H1 (cell line): ENCODE measurements at regions of chr20 and their contacts with region 1.

Region 1: DNA sequence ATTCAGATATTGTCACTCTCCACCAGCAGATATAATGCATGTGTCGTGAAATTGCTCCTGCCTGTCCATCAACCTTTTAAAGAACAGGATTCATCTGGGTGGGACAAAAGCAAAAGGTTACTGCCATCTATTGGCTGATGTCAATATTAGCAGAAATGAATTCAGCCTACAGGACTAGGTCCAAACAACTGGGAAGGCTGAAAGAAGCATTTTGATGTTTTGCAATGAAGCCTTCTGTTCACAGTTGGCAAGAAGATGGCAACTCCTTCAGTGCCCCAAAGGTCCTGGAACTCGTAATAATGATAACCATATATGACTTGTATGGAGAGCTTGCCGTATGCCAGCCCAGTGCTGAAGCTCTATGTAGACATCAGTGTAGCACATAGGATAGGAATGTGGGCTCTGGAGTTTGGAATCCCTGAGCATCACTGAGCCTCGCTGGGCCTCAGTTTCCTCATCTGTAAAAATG is 7.5 kb downstream of the BCAS1 start:
- DNase-seq: no peak
- H3K4me3 ChIP-seq: no peak overlapping the region
- H3K27ac ChIP-seq: no peak overlapping the region
- H3K4me1 ChIP-seq: peaks cover 0 to 7% (median 5%) of the 10 kb centered on the region in 4 experiments; a peak in 6 of 7 replicates
- H3K27me3 ChIP-seq: no peaks in the 10 kb centered on the region
- CTCF ChIP-seq: peak in 2 of 3 experiments; percentile 40 to 69; a peak in 2 of 4 replicates
- EP300 ChIP-seq: no peak
- POLR2A ChIP-seq: no peak
- RAD21 ChIP-seq: peak; percentile 79 to 80

Region 2: GRCh38 chr20:53939572-53940359 is 123.1 kb before region 1 on chr20:
- CTCF ChIA-PET with region 1: interaction called, 18 read pairs
- POLR2A ChIA-PET with region 1: no interaction called
- DNase-seq: peak; percentile 77 to 92
- H3K4me3 ChIP-seq: peak overlapping the region in 2 of 4 experiments; percentile 13 to 48; a peak in 2 of 8 replicates
- H3K27ac ChIP-seq: peak overlapping the region; percentile 35
- H3K4me1 ChIP-seq: peaks cover 6 to 25% (median 17%) of the 10 kb centered on the region in 4 experiments
- H3K27me3 ChIP-seq: no peaks in the 10 kb centered on the region
- CTCF ChIP-seq: peak; percentile 57 to 89 (median 82)
- EP300 ChIP-seq: no peak
- POLR2A ChIP-seq: no peak
- RAD21 ChIP-seq: peak; percentile 97 to 99

Region 3: GRCh38 chr20:53956013-53956715 is 106.7 kb before region 1 on chr20:
- CTCF ChIA-PET with region 1: interaction called, 11 read pairs
- POLR2A ChIA-PET with region 1: no interaction called
- DNase-seq: no peak
- H3K4me3 ChIP-seq: no peak overlapping the region
- H3K27ac ChIP-seq: no peak overlapping the region
- H3K4me1 ChIP-seq: peaks cover 0 to 3% (median 0%) of the 10 kb centered on the region in 4 experiments; a peak in 1 of 7 replicates
- H3K27me3 ChIP-seq: no peaks in the 10 kb centered on the region; a peak in 1 of 7 replicates
- CTCF ChIP-seq: no peak
- EP300 ChIP-seq: no peak
- POLR2A ChIP-seq: no peak
- RAD21 ChIP-seq: no peak

Region 4: DNA sequence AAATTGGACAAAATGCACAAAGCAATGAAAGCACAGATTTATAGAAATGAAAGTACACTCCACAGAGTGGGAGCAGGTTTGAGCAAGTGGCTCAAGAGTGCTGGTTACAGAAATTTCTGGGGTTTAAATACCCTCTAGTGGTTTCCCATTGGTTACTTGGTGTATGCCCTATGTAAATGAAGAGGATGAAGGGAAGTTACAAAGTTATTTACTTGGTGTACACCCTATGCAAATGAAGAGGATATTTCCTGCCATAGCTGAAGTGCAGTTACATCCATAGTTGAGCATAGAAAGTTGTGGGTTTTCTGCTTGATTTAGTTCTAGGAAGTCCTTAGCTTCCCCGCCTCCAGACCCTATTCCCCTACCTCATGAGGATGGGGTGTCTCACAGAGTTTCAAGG is 15.1 kb before region 1 on chr20:
- CTCF ChIA-PET with region 1: interaction called, 16 read pairs
- POLR2A ChIA-PET with region 1: no interaction called
- DNase-seq: no peak
- H3K4me3 ChIP-seq: no peak overlapping the region
- H3K27ac ChIP-seq: no peak overlapping the region
- H3K4me1 ChIP-seq: no peaks in the 10 kb centered on the region
- H3K27me3 ChIP-seq: no peaks in the 10 kb centered on the region
- CTCF ChIP-seq: no peak
- EP300 ChIP-seq: no peak
- POLR2A ChIP-seq: no peak
- RAD21 ChIP-seq: no peak

Region 5: GRCh38 chr20:54078296-54078984 is 15.6 kb after region 1 on chr20:
- CTCF ChIA-PET with region 1: interaction called, 11 read pairs
- POLR2A ChIA-PET with region 1: interaction called, 4 read pairs
- DNase-seq: no peak
- H3K4me3 ChIP-seq: no peak overlapping the region
- H3K27ac ChIP-seq: no peak overlapping the region
- H3K4me1 ChIP-seq: no peaks in the 10 kb centered on the region
- H3K27me3 ChIP-seq: no peaks in the 10 kb centered on the region
- CTCF ChIP-seq: no peak
- EP300 ChIP-seq: no peak
- POLR2A ChIP-seq: no peak
- RAD21 ChIP-seq: no peak

Region 6: GRCh38 chr20:54199721-54200176 is 136.9 kb after region 1 on chr20:
- CTCF ChIA-PET with region 1: interaction called, 38 read pairs
- POLR2A ChIA-PET with region 1: no interaction called
- DNase-seq: peak; percentile 70 to 91
- H3K4me3 ChIP-seq: no peak overlapping the region
- H3K27ac ChIP-seq: no peak overlapping the region
- H3K4me1 ChIP-seq: peaks cover 0 to 4% (median 2%) of the 10 kb centered on the region in 4 experiments; a peak in 2 of 7 replicates
- H3K27me3 ChIP-seq: no peaks in the 10 kb centered on the region
- CTCF ChIP-seq: peak; percentile 85 to 89 (median 86)
- EP300 ChIP-seq: no peak
- POLR2A ChIP-seq: no peak
- RAD21 ChIP-seq: peak; percentile 94 to 97